Common myeloid progenitor, CD34-positive (primary cell): ENCODE measurements at regions of chr4 and their contacts with region 1.

Region 1: DNA sequence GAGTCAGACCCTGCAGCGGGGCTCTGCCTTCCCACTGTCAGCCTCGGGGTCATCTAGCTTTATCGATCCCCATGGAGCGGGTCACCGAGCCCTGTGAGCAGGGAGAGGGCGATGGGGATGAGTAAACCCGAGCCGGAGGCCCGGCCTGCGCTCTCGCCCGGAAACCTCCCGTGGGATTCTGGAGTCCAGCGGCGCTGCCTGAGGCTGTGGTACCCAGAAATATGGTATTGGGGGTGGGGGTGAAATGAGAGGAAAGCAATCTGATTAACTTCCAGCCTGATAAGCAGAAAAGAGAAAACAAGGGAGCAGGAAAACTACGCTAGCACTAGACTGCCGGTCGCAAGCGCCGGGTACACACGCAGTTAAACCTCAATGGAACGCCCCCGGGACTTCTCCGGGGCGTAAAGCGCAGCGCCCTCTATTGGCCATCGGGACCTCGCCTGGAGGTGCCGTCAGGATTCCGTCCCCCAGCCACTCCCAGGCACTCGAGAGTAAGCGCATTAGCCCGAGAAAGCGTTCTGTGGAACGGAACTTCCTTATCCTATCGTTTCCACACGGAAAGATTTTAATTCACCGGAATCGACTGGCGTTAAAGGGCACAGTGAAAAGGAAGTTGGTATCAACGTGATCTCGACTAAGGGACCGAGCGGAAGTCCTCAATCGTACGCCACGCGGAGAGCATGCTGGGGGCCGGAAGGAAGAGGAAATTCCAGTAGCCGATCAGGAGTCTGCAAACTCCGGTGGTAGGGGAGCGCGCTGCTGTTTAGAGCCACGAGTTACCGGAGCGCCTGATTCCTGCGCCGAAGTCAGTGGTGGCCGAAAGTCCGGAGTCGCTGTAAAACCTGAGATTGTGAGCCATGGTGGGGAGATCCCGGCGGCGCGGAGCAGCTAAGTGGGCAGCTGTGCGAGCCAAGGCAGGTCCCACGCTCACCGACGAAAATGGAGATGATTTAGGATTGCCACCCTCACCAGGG is at the start of gene UTP3:
- DNase-seq: peak; percentile 97 to 98 (median 98)
- H3K4me3 ChIP-seq: peak within 1 kb of the TSS; percentile 73 to 100 (median 87)
- H3K27ac ChIP-seq: peak within 1 kb of the TSS; percentile 92 to 94
- H3K4me1 ChIP-seq: peaks cover 8 to 35% (median 25%) of the 10 kb centered on the region in 4 experiments
- H3K27me3 ChIP-seq: no peaks in the 10 kb centered on the region

Region 2: DNA sequence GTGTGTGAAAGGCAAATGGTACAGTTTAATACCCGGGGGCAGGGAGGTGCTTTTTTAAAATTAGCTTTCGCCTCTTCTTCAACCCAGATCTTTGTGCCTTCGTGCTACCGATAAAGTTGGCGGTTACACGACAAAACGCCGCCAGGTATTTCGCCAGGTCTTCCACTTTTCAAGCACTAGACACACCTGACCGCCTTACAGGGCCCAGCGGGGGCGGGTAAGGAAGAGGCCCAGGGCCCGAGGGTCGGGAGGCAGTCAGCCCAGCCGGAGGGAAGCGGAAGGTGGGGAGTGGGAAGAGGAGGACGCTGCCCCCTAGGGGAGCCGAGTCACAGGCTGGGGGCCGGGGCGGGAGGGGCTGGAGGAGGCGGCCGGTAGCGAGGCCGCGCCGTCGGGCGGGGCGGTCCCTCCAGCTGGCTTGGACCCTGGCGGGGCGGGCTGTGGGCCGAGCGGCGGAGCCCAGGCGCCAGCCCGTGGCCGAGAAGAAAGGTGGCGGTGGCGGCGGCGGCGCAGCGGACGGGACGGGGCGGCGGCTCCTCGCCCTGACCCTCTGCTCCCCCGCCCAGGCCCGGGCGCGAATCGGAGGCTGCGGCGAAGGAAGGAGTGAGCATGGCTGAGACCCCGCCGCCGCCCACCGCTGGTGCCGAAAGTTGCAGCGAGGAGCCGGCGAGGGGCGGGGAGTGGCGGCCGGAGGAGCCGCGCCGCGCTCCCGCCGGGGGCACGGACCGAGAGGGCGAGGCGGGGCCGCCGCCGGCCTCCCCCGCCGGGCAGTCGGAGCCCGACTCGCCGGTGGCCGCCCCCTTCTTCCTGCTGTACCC is 16.4 kb after region 1 on chr4:
- CTCF ChIA-PET with region 1: interaction called, 28 read pairs
- POLR2A ChIA-PET with region 1: interaction called, 6 read pairs
- DNase-seq: peak; percentile 70 to 80 (median 79)
- H3K4me3 ChIP-seq: peak overlapping the region; percentile 56 to 94 (median 82)
- H3K27ac ChIP-seq: peak overlapping the region; percentile 59 to 81
- H3K4me1 ChIP-seq: peaks cover 15 to 20% (median 17%) of the 10 kb centered on the region in 4 experiments
- H3K27me3 ChIP-seq: no peaks in the 10 kb centered on the region